Activated CD4-positive, alpha-beta T cell treated with anti-CD3 and anti-CD28 coated beads, Interleukin-2, amount 10 ng/mL, durations not matched to agents 24 days and 14 days (primary cell): ENCODE measurements at regions of chr2 and their contacts with region 1.

Region 1: GRCh38 chr2:11743846-11744553 is 2.4 kb upstream of the LPIN1 start:
- DNase-seq: peak; percentile 90
- H3K4me3 Mint-ChIP-seq: peak overlapping the region; percentile 29
- H3K27ac Mint-ChIP-seq: peak overlapping the region; percentile 78
- H3K4me1 Mint-ChIP-seq: peaks cover 45% of the 10 kb centered on the region
- H3K27me3 Mint-ChIP-seq: no peaks in the 10 kb centered on the region

Region 2: GRCh38 chr2:11688222-11689069 is 55.6 kb before region 1 on chr2:
- intact Hi-C with region 1: loop called (anchors 2 kb)
- DNase-seq: peak; percentile 96
- H3K4me3 Mint-ChIP-seq: peak overlapping the region; percentile 74
- H3K27ac Mint-ChIP-seq: peak overlapping the region; percentile 23
- H3K4me1 Mint-ChIP-seq: peaks cover 15% of the 10 kb centered on the region
- H3K27me3 Mint-ChIP-seq: peaks cover 8% of the 10 kb centered on the region

Region 3: DNA sequence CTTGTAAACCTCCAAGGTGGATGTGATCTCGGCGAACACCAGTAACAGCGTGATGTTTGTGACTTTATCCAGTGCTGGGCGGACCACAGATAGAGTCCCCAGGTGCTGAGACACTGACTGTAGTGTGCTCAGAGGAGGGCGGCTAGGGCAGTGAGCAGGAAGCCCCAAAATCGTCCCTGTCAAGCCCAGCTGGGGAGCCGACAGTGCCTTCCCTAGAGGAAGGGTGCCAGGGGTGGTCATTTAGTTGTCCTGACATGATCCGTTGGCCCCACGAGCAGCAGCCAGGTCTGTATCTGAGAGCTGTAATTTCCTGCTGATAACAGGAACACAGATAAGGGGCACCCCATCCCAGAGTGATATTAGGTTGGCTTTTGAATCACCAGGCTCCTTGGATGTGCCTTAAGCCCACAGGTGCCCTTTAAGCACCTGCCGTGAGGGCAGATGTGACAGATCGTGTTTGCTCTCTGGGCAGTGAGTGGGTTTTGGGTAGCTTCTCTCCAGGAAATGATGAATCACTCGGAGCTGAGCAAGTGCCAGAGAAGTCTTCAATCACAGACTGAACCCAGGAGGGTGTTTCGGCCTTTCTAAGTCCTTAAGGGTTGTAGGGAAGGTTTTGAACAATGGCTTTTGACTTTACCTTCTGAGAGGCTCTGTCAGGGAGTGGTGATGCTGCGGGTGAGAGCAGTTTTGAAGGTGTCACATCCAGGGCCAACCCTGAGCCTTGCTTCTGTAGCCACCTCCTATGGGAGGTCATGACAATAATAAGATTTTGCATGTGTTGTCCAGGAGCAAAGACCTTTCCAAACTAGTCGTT is 10.1 kb after region 1 on chr2:
- intact Hi-C with region 1: loop called (anchors 1 kb)
- DNase-seq: peak; percentile 87
- H3K4me3 Mint-ChIP-seq: peak overlapping the region; percentile 80
- H3K27ac Mint-ChIP-seq: peak overlapping the region; percentile 89
- H3K4me1 Mint-ChIP-seq: peaks cover 71% of the 10 kb centered on the region
- H3K27me3 Mint-ChIP-seq: no peaks in the 10 kb centered on the region

Region 4: GRCh38 chr2:11778923-11779757 is 35.1 kb after region 1 on chr2:
- intact Hi-C with region 1: loop called (anchors 1 kb)
- DNase-seq: peak; percentile 95
- H3K4me3 Mint-ChIP-seq: peak overlapping the region; percentile 74
- H3K27ac Mint-ChIP-seq: peak overlapping the region; percentile 55
- H3K4me1 Mint-ChIP-seq: peaks cover 32% of the 10 kb centered on the region
- H3K27me3 Mint-ChIP-seq: no peaks in the 10 kb centered on the region